ENCODE measurements at regions of chr16 and their contacts with region 1.

Region 1: DNA sequence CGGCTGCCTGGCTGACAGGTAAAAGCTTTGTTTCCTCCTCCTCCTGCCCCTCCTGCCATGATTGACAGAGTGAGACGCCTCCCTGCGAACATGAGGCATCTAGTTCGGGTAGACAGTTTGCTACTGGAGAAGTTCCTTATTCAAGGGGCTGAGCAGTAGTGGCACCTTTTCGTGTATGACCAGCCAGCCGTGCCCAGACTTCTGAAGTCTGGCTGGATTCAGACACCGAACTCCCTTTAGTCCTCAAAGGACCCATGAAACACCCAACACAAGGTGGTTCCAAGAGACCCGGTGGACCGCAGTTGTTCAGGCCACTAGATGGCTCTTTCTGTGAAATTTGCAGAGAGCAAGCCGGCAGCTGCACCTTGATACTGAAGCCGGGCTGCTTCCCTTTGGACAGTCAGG is 192.8 kb downstream of the XYLT1 start:
- DNase-seq: peak in 4 of 6 donors; percentile 49 to 62 (median 56)
- ATAC-seq: peak; percentile 74 to 82 (median 79)
- H3K4me3 ChIP-seq: no peak overlapping the region
- H3K27ac ChIP-seq: peak overlapping the region in 2 of 4 donors; percentile 9 to 83
- H3K4me1 ChIP-seq: peaks cover 25 to 26% (median 25%) of the 10 kb centered on the region in 3 donors
- H3K27me3 ChIP-seq: no peaks in the 10 kb centered on the region
- CTCF ChIP-seq: peak in 3 of 4 donors; percentile 28 to 34 (median 28)

Region 2: GRCh38 chr16:17101646-17102045 is 176.3 kb before region 1 on chr16:
- intact Hi-C with region 1: no loop called
- DNase-seq: no peak
- ATAC-seq: peak in 1 of 4 donors; percentile 20
- H3K4me3 ChIP-seq: no peak overlapping the region
- H3K27ac ChIP-seq: no peak overlapping the region
- H3K4me1 ChIP-seq: no peaks in the 10 kb centered on the region
- H3K27me3 ChIP-seq: no peaks in the 10 kb centered on the region
- CTCF ChIP-seq: no peak

Region 3: GRCh38 chr16:17194190-17194780 is 83.7 kb before region 1 on chr16:
- intact Hi-C with region 1: no loop called
- DNase-seq: peak; percentile 23 to 83 (median 66)
- ATAC-seq: peak; percentile 69 to 95 (median 78)
- H3K4me3 ChIP-seq: no peak overlapping the region
- H3K27ac ChIP-seq: no peak overlapping the region
- H3K4me1 ChIP-seq: no peaks in the 10 kb centered on the region
- H3K27me3 ChIP-seq: no peaks in the 10 kb centered on the region
- CTCF ChIP-seq: peak; percentile 62 to 83 (median 82)

Region 4: DNA sequence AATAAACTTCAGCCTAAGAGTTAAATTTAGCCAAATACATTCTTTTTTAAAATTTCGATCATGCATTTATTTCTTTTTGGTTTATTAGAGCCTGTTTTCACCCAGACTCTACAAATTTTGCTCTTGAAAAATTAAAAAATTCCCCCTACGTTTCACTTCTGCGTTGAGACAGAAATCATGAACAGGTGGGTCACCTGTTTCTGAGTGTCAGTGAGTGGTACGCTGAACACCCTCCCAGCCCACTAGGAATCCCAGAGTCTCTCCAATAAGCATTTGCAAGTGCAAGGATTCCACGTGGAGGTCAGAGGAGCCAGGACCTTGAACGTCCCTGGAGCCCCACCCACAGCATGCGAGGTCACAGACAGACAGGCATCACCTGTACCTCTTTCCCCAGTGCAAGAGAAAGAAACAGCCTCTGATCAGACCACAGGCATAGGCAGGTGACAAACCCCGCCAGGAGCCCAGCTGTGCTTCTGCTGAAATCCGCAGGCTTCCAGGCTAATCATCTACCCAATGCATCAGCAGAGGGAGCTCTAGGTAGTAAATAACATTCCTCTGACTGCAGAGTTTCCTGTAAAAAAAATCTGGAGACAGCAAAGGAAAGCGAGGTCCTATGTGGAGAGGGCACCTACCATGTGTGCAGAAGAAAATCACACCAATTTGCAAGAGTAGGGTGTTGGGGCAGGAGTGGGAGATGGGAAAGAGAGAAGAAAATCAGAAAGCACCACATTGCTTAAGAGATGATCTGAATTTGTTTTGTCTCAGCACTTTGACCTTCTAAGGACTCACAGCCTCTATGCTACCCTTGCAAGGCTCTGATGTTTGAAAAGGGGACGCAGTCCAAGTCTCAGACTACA is 198.7 kb after region 1 on chr16:
- intact Hi-C with region 1: loop called in 1 of 3 experiments (anchors 10 kb)
- DNase-seq: peak; percentile 62 to 78 (median 68)
- ATAC-seq: peak; percentile 96 to 99 (median 98)
- H3K4me3 ChIP-seq: no peak overlapping the region
- H3K27ac ChIP-seq: no peak overlapping the region
- H3K4me1 ChIP-seq: no peaks in the 10 kb centered on the region
- H3K27me3 ChIP-seq: no peaks in the 10 kb centered on the region
- CTCF ChIP-seq: peak; percentile 20 to 33 (median 27)